ENCODE measurements at regions of chr12 and their contacts with region 1.

Region 1: DNA sequence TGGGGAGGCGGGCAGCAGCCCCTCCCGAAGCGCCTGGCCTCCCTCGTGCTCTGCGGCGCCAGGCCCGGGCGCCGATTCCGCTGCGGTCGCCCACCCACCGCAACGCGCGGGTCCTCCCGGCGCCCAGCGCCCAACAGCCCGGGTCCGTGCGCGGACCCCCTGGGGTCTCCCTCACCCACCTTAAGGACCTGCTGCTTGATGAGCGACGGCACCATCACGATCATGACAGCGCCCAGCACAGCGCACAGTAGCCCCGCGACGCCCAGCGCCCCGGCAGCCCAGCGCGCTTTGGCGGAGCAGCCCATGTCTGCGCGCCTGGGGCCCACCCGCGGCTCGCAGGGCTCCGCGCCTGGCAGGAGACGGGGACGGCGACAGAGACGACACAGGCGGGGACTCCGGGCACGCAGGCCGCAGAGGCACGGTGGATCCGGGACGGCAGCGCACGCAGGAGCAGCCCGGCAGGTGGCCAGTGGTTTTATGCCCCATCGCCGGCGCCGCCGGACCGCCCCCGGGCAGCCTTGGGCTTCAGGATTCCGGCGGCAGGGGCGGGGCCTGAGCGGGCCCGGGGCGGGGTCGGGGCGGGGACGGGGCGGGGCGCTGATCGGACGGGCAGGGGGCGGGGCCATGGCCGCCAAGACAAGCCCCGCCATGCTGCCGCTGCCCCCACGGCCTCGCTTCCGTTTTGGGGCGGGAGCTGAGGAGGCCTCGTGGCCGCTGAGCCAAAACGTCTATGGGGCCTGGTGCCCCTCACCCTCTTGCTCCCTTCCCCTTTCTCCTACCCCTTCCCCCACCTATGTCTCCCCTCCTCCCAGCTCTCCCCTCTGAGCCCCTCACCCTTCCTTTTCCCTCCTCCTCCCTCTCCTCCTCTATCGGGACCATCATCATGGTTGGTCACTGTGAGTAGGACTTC is at the start of gene SCARB1:
- DNase-seq: peak; percentile 69
- H3K4me3 Mint-ChIP-seq: peak within 1 kb of the TSS; percentile 81
- H3K27ac Mint-ChIP-seq: peak within 1 kb of the TSS; percentile 88
- H3K4me1 Mint-ChIP-seq: peaks cover 18% of the 10 kb centered on the region
- H3K27me3 Mint-ChIP-seq: peaks cover 3% of the 10 kb centered on the region
- total RNA-seq, gene SCARB1: 25.8 and 27.1 TPM in 2 replicates

Region 2: DNA sequence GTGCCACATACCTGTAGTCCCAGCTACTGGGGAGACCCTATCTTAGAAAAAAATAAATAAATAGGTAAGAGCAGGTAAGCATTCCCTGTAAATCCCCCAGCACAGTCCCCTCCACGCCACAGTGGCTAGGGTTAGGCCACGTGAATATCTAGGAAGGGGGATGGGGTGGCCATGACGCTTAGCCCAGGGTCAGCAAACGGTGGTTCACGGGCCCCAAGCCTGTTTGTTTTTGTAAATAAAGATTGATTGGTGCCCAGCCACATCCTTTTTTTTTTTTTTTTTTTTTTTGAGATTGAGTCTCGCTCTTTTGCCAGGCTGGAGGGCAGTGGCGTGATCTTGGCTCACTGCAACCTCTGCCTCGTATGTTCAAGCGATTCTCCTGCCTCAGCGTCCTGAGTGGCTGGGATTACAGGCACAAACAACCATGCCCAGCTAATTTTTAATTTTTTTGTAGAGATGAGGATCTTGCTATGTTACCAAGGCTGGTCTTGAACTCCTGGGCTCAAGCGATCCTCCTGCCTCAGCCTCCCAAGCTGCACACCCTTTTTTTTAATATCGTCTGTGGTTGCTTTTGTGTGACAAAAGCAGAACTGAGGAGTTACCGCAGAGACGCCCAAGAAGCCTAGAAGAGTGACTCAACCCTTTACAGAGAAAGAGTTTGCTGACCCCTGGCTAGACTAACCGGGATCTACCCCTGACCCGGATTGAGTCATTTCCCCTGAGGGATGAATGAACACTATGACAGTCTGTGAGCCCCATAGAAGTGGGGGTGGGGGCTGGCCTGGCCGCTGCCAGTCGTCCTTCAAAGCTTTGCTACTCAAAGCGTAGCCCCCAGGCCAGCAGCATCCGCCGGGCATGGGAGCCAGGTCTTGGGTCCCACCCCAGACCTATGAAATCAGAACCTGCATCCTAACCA is 182.6 kb before region 1 on chr12:
- intact Hi-C with region 1: no loop called
- DNase-seq: peak; percentile 16
- H3K4me3 Mint-ChIP-seq: no peak overlapping the region
- H3K27ac Mint-ChIP-seq: no peak overlapping the region
- H3K4me1 Mint-ChIP-seq: peaks cover 30% of the 10 kb centered on the region
- H3K27me3 Mint-ChIP-seq: peaks cover 1% of the 10 kb centered on the region

Region 3: DNA sequence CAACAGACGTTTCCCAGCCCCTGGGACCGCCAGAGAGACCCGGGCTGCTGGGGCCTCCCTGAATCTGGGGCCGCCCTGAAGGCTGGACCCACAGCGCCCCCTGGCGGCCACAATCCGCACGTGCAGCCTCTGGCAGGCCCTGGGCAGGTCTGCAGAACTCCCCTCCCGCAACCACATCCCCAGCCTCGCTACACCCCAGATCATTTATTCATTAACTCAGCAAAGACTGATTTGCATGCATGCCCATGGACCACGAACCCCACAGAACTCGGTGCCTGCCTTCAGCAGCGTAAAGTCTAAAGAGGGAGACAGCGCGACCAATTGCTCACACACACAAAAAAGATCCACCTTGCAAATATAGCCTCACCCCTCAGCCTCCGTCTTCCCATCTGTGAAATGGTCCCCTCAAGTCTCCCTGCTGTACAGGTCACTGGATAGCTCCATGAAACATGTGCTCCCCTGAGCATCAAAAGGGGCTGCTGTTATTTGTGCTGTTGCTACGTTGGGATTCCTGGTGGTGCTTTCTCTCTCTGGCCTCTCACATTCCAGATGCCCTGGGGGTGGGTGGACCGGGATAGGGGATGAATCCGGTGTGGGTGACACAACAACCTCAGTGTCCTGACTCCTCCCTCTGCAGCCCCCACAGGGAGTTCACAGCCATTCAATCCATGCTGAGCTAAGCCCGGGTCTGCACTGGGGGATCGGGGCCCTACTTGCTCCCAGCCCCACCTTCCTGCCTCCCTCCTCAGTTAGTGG is 96.4 kb before region 1 on chr12:
- intact Hi-C with region 1: no loop called
- DNase-seq: peak; percentile 73
- H3K4me3 Mint-ChIP-seq: no peak overlapping the region
- H3K27ac Mint-ChIP-seq: no peak overlapping the region
- H3K4me1 Mint-ChIP-seq: peaks cover 23% of the 10 kb centered on the region
- H3K27me3 Mint-ChIP-seq: peaks cover 24% of the 10 kb centered on the region

Region 4: GRCh38 chr12:124898200-124898922 is 34.7 kb after region 1 on chr12:
- intact Hi-C with region 1: loop called (anchors 5 kb)
- DNase-seq: peak; percentile 42
- H3K4me3 Mint-ChIP-seq: no peak overlapping the region
- H3K27ac Mint-ChIP-seq: no peak overlapping the region
- H3K4me1 Mint-ChIP-seq: peaks cover 15% of the 10 kb centered on the region
- H3K27me3 Mint-ChIP-seq: peaks cover 2% of the 10 kb centered on the region